Activated CD4-positive, alpha-beta T cell treated with anti-CD3 and anti-CD28 coated beads, Interleukin-2, amount 10 ng/mL, durations not matched to agents 24 days and 14 days (primary cell): ENCODE measurements at regions of chr11 and their contacts with region 1.

Region 1: GRCh38 chr11:102317099-102317767 is at the start of gene BIRC3:
- DNase-seq: peak; percentile 97
- H3K4me3 Mint-ChIP-seq: peak within 1 kb of the TSS; percentile 91
- H3K27ac Mint-ChIP-seq: peak within 1 kb of the TSS; percentile 93
- H3K4me1 Mint-ChIP-seq: peaks cover 64% of the 10 kb centered on the region
- H3K27me3 Mint-ChIP-seq: peaks cover 2% of the 10 kb centered on the region
- total RNA-seq, gene BIRC3: 100 and 102 TPM in 2 replicates

Region 2: GRCh38 chr11:101748572-101749344 is 568.5 kb before region 1 on chr11:
- intact Hi-C with region 1: no loop called
- DNase-seq: no peak
- H3K4me3 Mint-ChIP-seq: no peak overlapping the region
- H3K27ac Mint-ChIP-seq: no peak overlapping the region
- H3K4me1 Mint-ChIP-seq: no peaks in the 10 kb centered on the region
- H3K27me3 Mint-ChIP-seq: no peaks in the 10 kb centered on the region

Region 3: DNA sequence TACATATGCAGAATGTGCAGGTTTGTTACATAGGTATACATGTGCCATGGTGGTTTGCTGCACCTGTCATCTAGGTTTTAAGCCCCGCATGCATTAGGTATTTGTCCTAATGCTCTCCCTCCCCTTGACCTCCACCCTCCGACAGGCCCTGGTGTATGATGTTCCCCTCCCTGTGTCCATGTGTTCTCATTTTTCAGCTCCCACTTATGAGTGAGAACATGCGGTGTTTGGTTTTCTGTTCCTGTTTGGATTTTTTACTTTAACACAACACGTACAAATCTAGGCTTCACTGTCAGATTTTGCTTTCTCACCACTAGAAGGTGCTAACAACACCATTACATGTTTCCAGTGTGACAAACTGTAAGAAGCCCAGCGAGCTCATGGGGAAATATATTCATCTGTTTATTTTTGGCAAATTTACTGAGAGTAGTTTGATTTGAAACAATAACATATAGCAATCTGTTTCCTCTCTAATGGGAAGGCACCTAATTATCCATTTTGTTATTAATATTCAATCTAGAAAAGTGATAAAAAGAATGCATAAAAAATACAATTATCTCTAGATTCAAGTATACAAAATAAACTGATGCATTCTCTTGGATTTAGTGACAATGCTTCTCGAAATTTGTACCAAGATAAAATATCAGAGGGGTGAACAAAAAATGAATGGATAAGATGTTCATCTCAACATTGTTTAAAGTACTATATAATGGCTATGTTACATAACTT is 23.2 kb before region 1 on chr11:
- intact Hi-C with region 1: loop called (anchors 1 kb)
- DNase-seq: peak; percentile 79
- H3K4me3 Mint-ChIP-seq: peak overlapping the region; percentile 86
- H3K27ac Mint-ChIP-seq: peak overlapping the region; percentile 90
- H3K4me1 Mint-ChIP-seq: peaks cover 31% of the 10 kb centered on the region
- H3K27me3 Mint-ChIP-seq: no peaks in the 10 kb centered on the region

Region 4: DNA sequence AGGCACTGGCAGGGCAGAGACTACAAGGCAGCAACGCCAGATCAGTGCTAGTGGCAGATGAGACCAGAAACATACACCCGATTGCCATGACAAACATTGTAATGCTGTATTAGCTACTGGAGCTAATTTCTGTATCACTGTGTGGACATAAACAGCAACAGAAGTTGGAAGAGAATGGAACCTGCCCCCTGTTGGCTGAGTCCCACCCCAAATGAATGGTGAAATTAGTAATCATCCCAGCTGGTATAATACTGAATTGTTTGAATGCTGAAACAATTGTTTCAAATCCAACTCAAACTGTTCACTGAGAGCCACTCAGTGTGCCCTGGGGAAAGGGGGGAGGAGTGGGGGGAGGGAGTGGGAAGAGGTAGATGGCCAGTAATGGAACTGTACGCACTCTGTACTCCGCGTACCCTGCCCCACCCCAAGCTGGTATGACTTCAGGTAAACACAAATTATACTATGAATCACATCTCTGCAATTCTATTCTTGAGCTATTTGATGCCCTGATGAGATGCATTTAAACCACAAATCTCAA is 11.1 kb before region 1 on chr11:
- intact Hi-C with region 1: loop called (anchors 1 kb)
- DNase-seq: no peak
- H3K4me3 Mint-ChIP-seq: peak overlapping the region; percentile 58
- H3K27ac Mint-ChIP-seq: peak overlapping the region; percentile 81
- H3K4me1 Mint-ChIP-seq: peaks cover 47% of the 10 kb centered on the region
- H3K27me3 Mint-ChIP-seq: no peaks in the 10 kb centered on the region

Region 5: DNA sequence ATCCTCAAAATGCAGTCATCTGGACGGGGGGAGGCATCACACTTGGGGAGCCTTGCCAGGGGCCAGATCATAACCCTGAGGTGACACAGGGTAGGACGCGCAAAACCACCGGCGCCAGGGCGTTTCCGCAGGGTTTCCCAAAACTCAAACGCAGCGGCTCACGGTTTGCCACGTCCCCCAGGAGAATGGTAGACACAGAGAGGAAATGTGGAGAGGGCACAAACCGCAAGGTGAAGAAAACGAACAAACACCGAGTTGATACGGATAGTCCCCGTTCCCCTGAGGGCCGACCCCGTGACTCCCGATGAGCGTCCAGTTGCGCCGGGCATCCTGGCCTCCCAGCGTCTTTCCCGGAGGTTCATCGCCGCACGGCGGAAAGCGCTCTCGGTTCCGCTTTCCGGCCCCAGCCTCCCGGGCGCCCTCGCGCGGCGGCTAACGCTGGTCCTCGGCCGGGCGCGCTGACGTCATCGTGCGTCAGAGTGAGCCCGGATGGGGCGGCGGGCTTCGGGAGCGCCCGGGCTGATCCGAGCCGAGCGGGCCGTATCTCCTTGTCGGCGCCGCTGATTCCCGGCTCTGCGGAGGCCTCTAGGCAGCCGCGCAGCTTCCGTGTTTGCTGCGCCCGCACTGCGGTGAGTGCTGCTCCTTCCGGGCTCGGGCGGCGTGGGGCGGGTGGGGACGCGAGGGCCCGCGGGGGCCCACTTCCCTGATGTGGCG is 29.7 kb after region 1 on chr11 and contains the start of gene BIRC2:
- intact Hi-C with region 1: loop called (anchors 1 kb)
- DNase-seq: peak; percentile 99
- H3K4me3 Mint-ChIP-seq: peak within 1 kb of the TSS; percentile 99
- H3K27ac Mint-ChIP-seq: peak within 1 kb of the TSS; percentile 99
- H3K4me1 Mint-ChIP-seq: peaks cover 36% of the 10 kb centered on the region
- H3K27me3 Mint-ChIP-seq: no peaks in the 10 kb centered on the region
- total RNA-seq, gene BIRC2: 27.8 and 30.8 TPM in 2 replicates

Region 6: GRCh38 chr11:102577182-102577581 is 259.9 kb after region 1 on chr11:
- intact Hi-C with region 1: no loop called
- DNase-seq: no peak
- H3K4me3 Mint-ChIP-seq: no peak overlapping the region
- H3K27ac Mint-ChIP-seq: no peak overlapping the region
- H3K4me1 Mint-ChIP-seq: peaks cover 35% of the 10 kb centered on the region
- H3K27me3 Mint-ChIP-seq: no peaks in the 10 kb centered on the region

Region 7: DNA sequence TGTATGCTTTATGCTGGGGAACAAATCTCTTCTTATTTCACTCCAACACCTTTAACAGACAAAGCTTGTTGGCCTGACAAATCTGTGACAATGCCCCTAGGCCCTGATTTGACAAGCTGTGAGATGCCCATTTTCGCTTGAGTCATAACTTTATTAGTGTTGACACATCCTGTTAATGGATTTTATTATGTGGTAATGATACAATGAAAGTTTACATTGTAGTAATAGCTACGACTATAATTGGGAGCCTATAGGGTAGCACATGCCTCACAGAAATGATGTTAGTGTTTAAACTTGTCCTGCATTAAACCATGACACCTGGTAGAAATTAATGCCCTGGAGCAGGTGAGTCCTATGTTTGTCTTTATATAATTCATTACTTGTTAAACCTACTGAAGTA is 466.5 kb after region 1 on chr11:
- intact Hi-C with region 1: no loop called
- DNase-seq: no peak
- H3K4me3 Mint-ChIP-seq: no peak overlapping the region
- H3K27ac Mint-ChIP-seq: no peak overlapping the region
- H3K4me1 Mint-ChIP-seq: no peaks in the 10 kb centered on the region
- H3K27me3 Mint-ChIP-seq: peaks cover 12% of the 10 kb centered on the region